ENCODE measurements at regions of chr7 and their contacts with region 1.

Region 1: GRCh38 chr7:135170274-135170997 is at the start of gene CYREN:
- DNase-seq: peak; percentile 96
- H3K4me3 ChIP-seq: peak within 1 kb of the TSS; percentile 92
- H3K27ac ChIP-seq: peak within 1 kb of the TSS; percentile 95
- H3K4me1 ChIP-seq: peaks cover 7% of the 10 kb centered on the region
- H3K27me3 ChIP-seq: no peaks in the 10 kb centered on the region
- CTCF ChIP-seq: peak; percentile 70
- total RNA-seq, gene CYREN: 39.6 and 46.8 TPM in 2 replicates

Region 2: DNA sequence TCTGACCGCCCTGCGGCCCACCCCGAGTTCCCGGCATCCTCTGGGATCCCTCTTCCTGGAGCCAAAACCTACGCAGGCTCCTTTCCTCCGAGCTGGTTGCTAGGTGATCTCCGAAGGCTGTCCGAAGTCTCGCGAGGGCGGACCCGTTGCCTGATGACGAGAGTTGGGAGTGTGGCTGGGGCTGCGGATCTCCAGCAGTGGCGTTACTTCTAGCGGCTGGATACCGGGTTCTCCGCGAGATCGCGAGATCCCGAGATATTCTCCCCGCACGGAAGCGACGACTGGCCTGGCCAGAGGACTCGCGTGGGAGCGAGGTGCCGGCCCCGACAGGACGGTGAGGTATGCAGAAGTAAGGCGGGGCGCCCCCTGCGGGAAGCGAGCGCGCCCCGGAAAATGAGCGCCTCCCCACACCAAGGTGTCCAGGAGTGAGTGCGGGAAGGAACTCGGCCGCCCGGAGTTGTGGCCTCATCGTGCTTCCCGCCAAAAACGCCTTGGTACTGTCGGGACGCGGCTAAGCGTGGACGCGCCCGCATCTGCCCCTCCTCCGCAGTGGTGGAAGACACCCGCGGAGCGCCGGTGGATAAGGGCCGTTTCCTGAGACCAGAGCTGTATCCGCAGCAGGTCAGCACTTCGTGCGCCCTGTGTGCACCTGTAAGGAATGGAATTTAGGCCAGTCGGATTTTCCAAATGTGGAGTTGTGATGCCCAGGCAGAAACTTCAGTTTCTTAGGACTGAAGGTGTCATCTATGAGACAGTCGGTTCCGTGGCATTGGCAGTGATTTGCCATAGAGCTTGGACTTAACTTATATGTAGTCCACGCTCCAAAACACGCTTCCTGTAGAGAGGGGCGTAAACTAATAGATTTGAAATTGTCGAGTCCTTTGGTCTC is 183.8 kb before region 1 on chr7 and contains the start of gene AGBL3:
- CTCF ChIA-PET with region 1: no interaction called
- POLR2A ChIA-PET with region 1: no interaction called
- intact Hi-C with region 1: loop called (anchors 2 kb)
- DNase-seq: peak; percentile 98
- H3K4me3 ChIP-seq: peak within 1 kb of the TSS; percentile 71
- H3K27ac ChIP-seq: peak within 1 kb of the TSS; percentile 88
- H3K4me1 ChIP-seq: peaks cover 17% of the 10 kb centered on the region
- H3K27me3 ChIP-seq: no peaks in the 10 kb centered on the region
- CTCF ChIP-seq: peak; percentile 74
- total RNA-seq, gene AGBL3: 2.4 and 2.9 TPM in 2 replicates

Region 3: GRCh38 chr7:135111379-135111778 is 59.1 kb before region 1 on chr7:
- CTCF ChIA-PET with region 1: no interaction called
- POLR2A ChIA-PET with region 1: no interaction called
- intact Hi-C with region 1: loop called (anchors 10 kb)
- DNase-seq: no peak
- H3K4me3 ChIP-seq: no peak overlapping the region
- H3K27ac ChIP-seq: no peak overlapping the region
- H3K4me1 ChIP-seq: no peaks in the 10 kb centered on the region
- H3K27me3 ChIP-seq: no peaks in the 10 kb centered on the region
- CTCF ChIP-seq: no peak

Region 4: GRCh38 chr7:135211179-135211945 is 40.9 kb after region 1 on chr7 and contains the start of gene WDR91:
- CTCF ChIA-PET with region 1: no interaction called
- POLR2A ChIA-PET with region 1: no interaction called
- intact Hi-C with region 1: loop called (anchors 5 kb)
- DNase-seq: peak; percentile 95
- H3K4me3 ChIP-seq: peak within 1 kb of the TSS; percentile 96
- H3K27ac ChIP-seq: peak within 1 kb of the TSS; percentile 71
- H3K4me1 ChIP-seq: no peaks in the 10 kb centered on the region
- H3K27me3 ChIP-seq: no peaks in the 10 kb centered on the region
- CTCF ChIP-seq: 0 out of 2 replicates have a peak, but pooled peaks have one; percentile 10
- total RNA-seq, gene WDR91: 7.0 and 9.8 TPM in 2 replicates

Measured in A673 (cell line).